Activated naive CD4-positive, alpha-beta T cell treated with anti-CD3 and anti-CD28 coated beads for 36 hours (primary cell): ENCODE measurements at regions of chr1 and their contacts with region 1.

Region 1: GRCh38 chr1:58783993-58784757 is at the start of gene JUN:
- DNase-seq: peak; percentile 99
- H3K4me3 Mint-ChIP-seq: peak within 1 kb of the TSS; percentile 97
- H3K27ac Mint-ChIP-seq: peak within 1 kb of the TSS; percentile 99
- H3K4me1 Mint-ChIP-seq: peaks cover 16% of the 10 kb centered on the region
- H3K27me3 Mint-ChIP-seq: no peaks in the 10 kb centered on the region
- total RNA-seq, gene JUN: 24.2 to 25.9 TPM

Region 2: DNA sequence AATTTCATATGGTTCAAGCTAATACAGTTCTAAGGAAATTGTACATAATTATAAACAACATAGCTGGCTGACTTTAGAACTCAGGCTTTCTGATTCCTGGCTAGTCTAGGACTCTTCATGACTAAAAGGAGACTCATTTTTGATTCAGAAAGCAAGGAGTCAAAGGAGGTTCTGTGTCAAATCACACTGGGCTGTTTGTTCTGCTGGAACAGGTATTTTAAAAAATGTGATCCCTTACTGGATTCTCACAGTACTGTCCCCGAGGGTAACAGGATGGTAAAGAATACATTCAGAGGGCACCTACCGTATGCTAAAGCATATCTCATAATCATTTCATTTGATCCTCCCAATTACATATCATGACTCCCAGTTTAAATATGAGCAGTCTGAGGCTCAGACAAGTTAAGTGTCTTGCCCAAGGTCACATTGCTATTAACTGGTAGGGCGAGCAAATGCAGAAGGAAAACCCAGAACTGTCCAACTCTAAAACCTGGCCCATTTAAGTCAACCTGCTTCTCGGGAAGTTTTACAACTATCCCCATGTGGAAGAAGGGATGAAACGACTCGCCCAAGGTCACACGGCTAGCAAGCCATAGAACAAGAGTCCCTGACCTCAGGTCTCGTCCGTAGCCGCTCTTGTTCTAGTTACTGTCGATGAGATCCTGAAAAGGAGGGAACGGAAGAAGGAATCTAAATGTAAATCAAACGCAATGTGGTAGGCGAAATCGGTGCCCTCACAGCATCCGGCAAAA is 85.0 kb before region 1 on chr1:
- CTCF ChIA-PET with region 1: no interaction called
- intact Hi-C with region 1: loop called (anchors 1 kb)
- DNase-seq: peak; percentile 17
- H3K4me3 Mint-ChIP-seq: peak overlapping the region; percentile 96
- H3K27ac Mint-ChIP-seq: peak overlapping the region; percentile 91
- H3K4me1 Mint-ChIP-seq: peaks cover 19% of the 10 kb centered on the region
- H3K27me3 Mint-ChIP-seq: no peaks in the 10 kb centered on the region

Region 3: DNA sequence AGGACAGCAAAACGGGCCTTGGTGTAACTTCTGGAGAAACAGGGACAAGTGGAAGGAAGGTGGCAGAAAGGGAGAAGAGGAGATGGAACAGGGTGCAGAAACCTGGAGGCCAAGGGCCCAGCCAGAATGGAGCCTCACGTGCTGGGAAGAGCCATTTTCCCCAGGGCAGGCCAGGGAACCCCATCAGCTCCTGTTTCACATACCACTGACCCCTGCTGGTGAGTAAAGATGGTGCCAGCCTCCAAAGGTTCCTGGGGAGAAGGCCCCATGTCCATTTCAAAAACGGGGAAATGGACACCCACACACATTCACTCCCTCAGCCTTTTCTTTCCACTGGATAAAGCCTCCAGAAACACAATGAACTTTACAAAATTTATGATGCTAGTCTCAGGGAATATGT is 57.3 kb after region 1 on chr1:
- CTCF ChIA-PET with region 1: no interaction called
- intact Hi-C with region 1: loop called (anchors 2 kb)
- DNase-seq: peak; percentile 16
- H3K4me3 Mint-ChIP-seq: no peak overlapping the region
- H3K27ac Mint-ChIP-seq: no peak overlapping the region
- H3K4me1 Mint-ChIP-seq: no peaks in the 10 kb centered on the region
- H3K27me3 Mint-ChIP-seq: no peaks in the 10 kb centered on the region

Region 4: GRCh38 chr1:58922302-58923089 is 138.3 kb after region 1 on chr1:
- CTCF ChIA-PET with region 1: no interaction called
- intact Hi-C with region 1: loop called (anchors 1 kb)
- DNase-seq: peak; percentile 82
- H3K4me3 Mint-ChIP-seq: no peak overlapping the region
- H3K27ac Mint-ChIP-seq: peak overlapping the region; percentile 10
- H3K4me1 Mint-ChIP-seq: peaks cover 17% of the 10 kb centered on the region
- H3K27me3 Mint-ChIP-seq: no peaks in the 10 kb centered on the region

Region 5: GRCh38 chr1:59071289-59071688 is 287.1 kb after region 1 on chr1:
- CTCF ChIA-PET with region 1: no interaction called
- intact Hi-C with region 1: loop called (anchors 1 kb)
- DNase-seq: peak; percentile 19
- H3K4me3 Mint-ChIP-seq: peak overlapping the region; percentile 37
- H3K27ac Mint-ChIP-seq: peak overlapping the region; percentile 82
- H3K4me1 Mint-ChIP-seq: peaks cover 23% of the 10 kb centered on the region
- H3K27me3 Mint-ChIP-seq: no peaks in the 10 kb centered on the region

Region 6: GRCh38 chr1:59332983-59333382 is 548.8 kb after region 1 on chr1:
- CTCF ChIA-PET with region 1: no interaction called
- intact Hi-C with region 1: loop called (anchors 1 kb)
- DNase-seq: peak; percentile 54
- H3K4me3 Mint-ChIP-seq: no peak overlapping the region
- H3K27ac Mint-ChIP-seq: no peak overlapping the region
- H3K4me1 Mint-ChIP-seq: peaks cover 26% of the 10 kb centered on the region
- H3K27me3 Mint-ChIP-seq: no peaks in the 10 kb centered on the region

Region 7: DNA sequence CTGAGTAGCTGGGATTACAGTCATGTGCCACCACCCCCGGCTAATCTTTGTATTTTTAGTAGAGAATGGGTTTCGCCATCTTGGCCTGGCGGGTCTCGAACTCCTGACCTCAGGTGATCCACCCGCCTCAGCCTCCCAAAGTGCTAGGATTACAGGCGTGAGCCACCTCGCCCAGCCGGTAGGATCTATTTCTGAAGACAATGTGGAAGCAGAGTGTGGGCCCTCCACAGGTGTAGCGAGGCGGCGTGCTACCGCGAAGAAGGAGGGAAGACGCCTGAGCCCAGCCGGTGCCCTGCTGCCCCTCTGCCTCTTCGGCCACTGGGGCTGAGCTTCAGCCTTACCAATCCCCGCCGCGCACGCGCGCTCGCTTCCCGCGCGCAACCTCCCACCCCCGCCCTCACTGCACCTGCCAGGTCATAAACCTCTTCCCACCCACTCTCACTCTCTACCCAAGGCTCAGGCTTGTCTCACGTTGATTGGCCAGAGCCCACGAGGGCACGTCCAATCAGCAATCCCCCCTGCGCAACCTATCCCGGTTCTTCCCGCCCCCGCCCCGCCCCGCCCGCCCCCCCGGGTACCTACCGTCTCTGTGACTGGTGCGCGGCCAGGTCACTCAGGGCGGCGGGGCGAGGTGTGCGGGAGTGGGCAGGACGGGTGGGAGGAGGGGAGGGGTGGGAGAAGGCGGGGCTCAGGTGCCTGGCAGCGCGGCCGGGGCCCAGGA is 1030.2 kb after region 1 on chr1:
- CTCF ChIA-PET with region 1: no interaction called
- intact Hi-C with region 1: loop called (anchors 1 kb)
- DNase-seq: peak; percentile 93
- H3K4me3 Mint-ChIP-seq: no peak overlapping the region
- H3K27ac Mint-ChIP-seq: peak overlapping the region; percentile 78
- H3K4me1 Mint-ChIP-seq: peaks cover 3% of the 10 kb centered on the region
- H3K27me3 Mint-ChIP-seq: peaks cover 8% of the 10 kb centered on the region